ENCODE measurements at regions of chr12 and their contacts with region 1.

Region 1: GRCh38 chr12:108618079-108618952 is 15.4 kb downstream of the SELPLG start:
- DNase-seq: peak; percentile 89
- ATAC-seq: peak; percentile 88
- H3K4me3 Mint-ChIP-seq: no peak overlapping the region
- H3K27ac Mint-ChIP-seq: no peak overlapping the region
- H3K4me1 Mint-ChIP-seq: peaks cover 38% of the 10 kb centered on the region
- H3K27me3 Mint-ChIP-seq: no peaks in the 10 kb centered on the region; the same call in 1 of the 2 replicates
- CTCF ChIP-seq: peak; percentile 98

Region 2: DNA sequence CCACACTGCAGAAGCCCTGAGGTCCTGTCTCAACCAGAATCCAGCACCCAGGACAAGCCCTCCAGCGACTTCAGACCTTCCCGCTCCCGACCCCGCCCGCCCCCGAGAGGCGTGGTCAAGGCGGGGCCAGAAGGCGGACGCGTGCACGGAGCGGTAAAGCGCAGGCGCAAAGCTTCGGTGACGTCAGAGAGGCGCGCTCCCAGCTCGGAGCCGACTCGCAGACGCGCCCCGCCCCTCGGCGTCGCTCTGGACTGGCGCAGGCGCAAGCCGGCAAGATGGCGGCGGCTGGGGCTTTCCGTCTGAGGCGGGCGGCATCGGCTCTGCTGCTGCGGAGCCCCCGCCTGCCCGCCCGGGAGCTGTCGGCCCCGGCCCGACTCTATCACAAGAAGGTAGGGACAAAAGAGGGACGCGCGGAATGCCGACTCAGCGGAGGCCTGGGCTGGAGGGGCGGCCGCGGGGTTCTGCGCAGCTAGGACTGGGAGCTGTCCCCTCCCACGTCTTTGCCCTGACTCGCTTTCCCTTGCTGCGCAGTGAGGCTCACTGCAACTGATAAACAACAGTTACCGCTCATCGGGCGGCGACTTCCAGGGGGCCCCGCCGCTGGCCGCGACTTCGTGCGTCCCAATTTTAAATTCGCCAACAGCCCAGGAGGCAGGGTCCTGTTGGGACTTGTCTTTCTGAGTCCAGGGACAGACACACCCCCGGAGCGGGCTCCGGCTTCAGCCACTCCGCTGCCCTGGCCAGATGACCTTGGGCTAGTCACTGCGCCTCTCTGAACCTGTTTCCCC is 55.8 kb before region 1 on chr12 and contains the start of gene ISCU:
- CTCF ChIA-PET with region 1: interaction called, 14 read pairs
- POLR2A ChIA-PET with region 1: interaction called, 8 read pairs
- DNase-seq: peak; percentile 98
- ATAC-seq: peak; percentile 87
- H3K4me3 Mint-ChIP-seq: peak within 1 kb of the TSS; percentile 100
- H3K27ac Mint-ChIP-seq: peak within 1 kb of the TSS; percentile 100
- H3K4me1 Mint-ChIP-seq: peaks cover 26% of the 10 kb centered on the region
- H3K27me3 Mint-ChIP-seq: no peaks in the 10 kb centered on the region
- CTCF ChIP-seq: no peak
- total RNA-seq, gene ISCU: 73.8 to 85.9 TPM (median 74.2 TPM) in 3 replicates

Region 3: GRCh38 chr12:108570743-108571608 is 47.3 kb before region 1 on chr12:
- CTCF ChIA-PET with region 1: interaction called, 31 read pairs
- POLR2A ChIA-PET with region 1: interaction called, 10 read pairs
- DNase-seq: no peak
- ATAC-seq: peak; percentile 50; the same call in 1 of the 2 replicates
- H3K4me3 Mint-ChIP-seq: no peak overlapping the region
- H3K27ac Mint-ChIP-seq: no peak overlapping the region
- H3K4me1 Mint-ChIP-seq: no peaks in the 10 kb centered on the region
- H3K27me3 Mint-ChIP-seq: no peaks in the 10 kb centered on the region
- CTCF ChIP-seq: no peak

Region 4: DNA sequence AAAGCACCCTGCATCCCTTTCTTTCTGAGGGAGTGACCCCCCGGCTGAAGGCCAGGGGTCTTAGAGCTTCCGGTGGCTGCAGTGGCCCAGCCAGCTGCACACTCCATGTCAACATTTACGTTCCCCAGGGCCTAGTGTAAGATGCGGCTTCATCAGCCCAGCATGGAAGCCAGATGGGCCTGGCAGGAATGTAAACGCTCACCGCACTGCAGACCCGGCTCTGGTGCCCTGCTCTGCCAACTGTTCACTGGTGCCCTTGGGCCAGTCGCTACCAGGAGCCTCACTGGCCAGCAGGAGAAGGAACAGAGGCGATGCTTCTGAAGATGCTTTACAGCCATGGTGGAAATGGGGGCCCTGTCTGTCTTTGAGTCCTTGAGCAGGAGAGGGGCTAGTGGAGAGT is 11.8 kb before region 1 on chr12:
- CTCF ChIA-PET with region 1: interaction called, 11 read pairs
- POLR2A ChIA-PET with region 1: no interaction called
- DNase-seq: no peak
- ATAC-seq: no peak
- H3K4me3 Mint-ChIP-seq: no peak overlapping the region
- H3K27ac Mint-ChIP-seq: no peak overlapping the region
- H3K4me1 Mint-ChIP-seq: peaks cover 12% of the 10 kb centered on the region
- H3K27me3 Mint-ChIP-seq: no peaks in the 10 kb centered on the region
- CTCF ChIP-seq: no peak

Region 5: DNA sequence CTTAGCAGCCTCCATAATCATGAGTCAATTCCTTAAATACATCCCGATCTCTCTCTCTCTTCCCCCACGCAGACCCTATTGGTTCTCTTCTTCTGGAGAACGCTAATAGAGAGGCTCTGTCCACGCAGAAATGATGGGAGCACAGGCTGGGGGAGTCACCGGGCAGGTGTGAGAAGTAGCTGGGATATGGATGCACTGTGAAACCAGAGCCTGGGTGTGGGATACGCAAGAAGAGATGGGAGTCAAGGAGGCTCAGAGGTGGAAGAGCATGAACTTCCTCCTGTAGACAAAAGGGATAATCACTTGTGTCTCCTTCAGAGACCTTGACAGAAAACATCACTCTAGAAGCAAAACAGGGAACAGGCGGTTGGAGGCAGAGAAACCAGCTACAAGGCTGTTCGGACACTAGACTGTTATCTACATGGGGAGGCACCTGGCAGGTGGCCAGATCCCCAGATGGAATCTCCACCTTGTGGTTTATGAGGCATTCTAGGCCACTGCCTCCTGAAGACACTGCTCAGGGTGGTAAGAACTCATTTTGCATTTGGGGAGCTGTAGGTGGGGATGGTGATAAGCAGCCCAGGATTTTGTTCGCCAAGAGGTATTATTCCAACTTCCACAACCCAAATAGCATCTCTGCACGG is 22.6 kb after region 1 on chr12:
- CTCF ChIA-PET with region 1: interaction called, 20 read pairs
- POLR2A ChIA-PET with region 1: no interaction called
- DNase-seq: no peak
- ATAC-seq: no peak
- H3K4me3 Mint-ChIP-seq: no peak overlapping the region
- H3K27ac Mint-ChIP-seq: no peak overlapping the region
- H3K4me1 Mint-ChIP-seq: peaks cover 43% of the 10 kb centered on the region
- H3K27me3 Mint-ChIP-seq: no peaks in the 10 kb centered on the region
- CTCF ChIP-seq: no peak